Cardiac septum (tissue), 1 donor: ENCODE measurements at regions of chr5 and their contacts with region 1.

Region 1: GRCh38 chr5:78547731-78548615 is 100.6 kb downstream of the LHFPL2 start:
- DNase-seq: peak; percentile 91

Region 2: GRCh38 chr5:78569448-78569847 is 21.5 kb after region 1 on chr5:
- intact Hi-C with region 1: no loop called
- DNase-seq: no peak

Region 3: GRCh38 chr5:78594610-78595457 is 46.9 kb after region 1 on chr5:
- intact Hi-C with region 1: loop called (anchors 5 kb)
- DNase-seq: no peak

Region 4: GRCh38 chr5:78648359-78649210 is 100.6 kb after region 1 on chr5 and contains the start of gene LHFPL2:
- intact Hi-C with region 1: loop called (anchors 2 kb)
- DNase-seq: peak; percentile 85
- total RNA-seq, gene LHFPL2: 7.9 TPM

Region 5: DNA sequence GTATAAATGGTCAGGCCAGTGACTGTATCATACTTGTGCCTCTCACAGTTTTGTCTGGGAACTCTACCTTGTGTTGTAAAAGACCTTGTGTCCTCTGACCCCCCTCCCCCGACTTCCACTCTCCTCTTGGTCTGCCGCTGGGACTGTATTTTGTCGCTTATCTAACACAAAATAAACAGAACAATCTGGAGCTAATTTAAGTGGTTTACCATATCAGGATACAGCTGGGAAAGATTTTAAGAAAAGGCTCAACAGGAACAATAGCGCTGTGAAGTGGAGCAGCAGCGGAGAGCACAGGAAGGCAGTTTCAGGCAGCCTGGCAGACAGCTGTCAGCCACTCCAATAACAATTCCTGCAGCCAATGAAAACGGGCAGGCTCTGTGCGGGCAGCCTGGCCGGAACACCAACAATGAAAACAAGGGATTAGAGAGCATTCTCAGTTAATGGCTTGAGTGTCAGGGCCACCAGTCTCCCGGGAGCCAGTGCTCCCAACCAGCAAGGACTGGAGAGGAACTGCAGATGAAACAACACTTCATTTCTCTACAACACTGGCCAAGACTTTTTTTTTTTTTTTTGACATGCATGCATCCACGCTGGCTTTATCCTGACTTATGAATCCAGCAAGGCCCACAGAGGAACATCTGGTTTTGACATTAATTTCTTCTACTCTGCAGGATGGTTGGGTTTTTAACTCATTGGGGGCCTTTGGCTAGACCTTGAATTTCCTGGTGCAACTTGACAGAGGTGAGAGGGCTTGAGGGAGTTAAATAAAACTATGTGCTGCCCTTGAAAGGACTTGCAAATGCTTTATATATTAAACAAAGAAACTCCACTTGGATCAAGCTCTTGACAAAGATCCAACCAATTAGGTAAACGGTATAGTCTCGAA is 360.4 kb after region 1 on chr5:
- intact Hi-C with region 1: loop called (anchors 5 kb)
- DNase-seq: peak; percentile 79